ENCODE measurements at regions of chr20 and their contacts with region 1.

Region 1: GRCh38 chr20:2752567-2753460 is 47.6 kb downstream of the CPXM1 start:
- DNase-seq: peak; percentile 56
- H3K4me3 Mint-ChIP-seq: peak overlapping the region; percentile 75
- H3K27ac Mint-ChIP-seq: no peak overlapping the region
- H3K4me1 Mint-ChIP-seq: peaks cover 18% of the 10 kb centered on the region
- H3K27me3 Mint-ChIP-seq: peaks cover 20% of the 10 kb centered on the region

Region 2: DNA sequence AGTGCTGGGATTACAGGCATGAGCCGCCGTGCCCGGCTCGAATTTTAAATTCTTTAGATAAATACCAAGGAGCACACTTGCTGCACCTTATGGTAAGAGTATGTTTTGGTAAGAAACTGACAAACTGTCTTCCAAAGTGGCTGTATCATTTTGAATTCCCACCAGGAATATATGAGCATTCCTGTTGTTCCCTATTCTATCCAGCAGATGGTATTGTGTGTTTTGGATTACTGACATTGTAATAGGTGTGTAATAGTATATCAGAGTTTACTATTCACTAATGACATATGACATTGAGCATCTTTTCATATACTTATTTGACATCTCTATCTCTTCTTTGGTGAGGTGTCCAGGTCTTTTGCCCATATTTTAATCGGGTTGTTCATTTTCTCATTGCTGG is 331.6 kb before region 1 on chr20:
- CTCF ChIA-PET with region 1: no interaction called
- intact Hi-C with region 1: no loop called
- DNase-seq: no peak
- H3K4me3 Mint-ChIP-seq: no peak overlapping the region
- H3K27ac Mint-ChIP-seq: no peak overlapping the region
- H3K4me1 Mint-ChIP-seq: no peaks in the 10 kb centered on the region
- H3K27me3 Mint-ChIP-seq: peaks cover 3% of the 10 kb centered on the region

Region 3: DNA sequence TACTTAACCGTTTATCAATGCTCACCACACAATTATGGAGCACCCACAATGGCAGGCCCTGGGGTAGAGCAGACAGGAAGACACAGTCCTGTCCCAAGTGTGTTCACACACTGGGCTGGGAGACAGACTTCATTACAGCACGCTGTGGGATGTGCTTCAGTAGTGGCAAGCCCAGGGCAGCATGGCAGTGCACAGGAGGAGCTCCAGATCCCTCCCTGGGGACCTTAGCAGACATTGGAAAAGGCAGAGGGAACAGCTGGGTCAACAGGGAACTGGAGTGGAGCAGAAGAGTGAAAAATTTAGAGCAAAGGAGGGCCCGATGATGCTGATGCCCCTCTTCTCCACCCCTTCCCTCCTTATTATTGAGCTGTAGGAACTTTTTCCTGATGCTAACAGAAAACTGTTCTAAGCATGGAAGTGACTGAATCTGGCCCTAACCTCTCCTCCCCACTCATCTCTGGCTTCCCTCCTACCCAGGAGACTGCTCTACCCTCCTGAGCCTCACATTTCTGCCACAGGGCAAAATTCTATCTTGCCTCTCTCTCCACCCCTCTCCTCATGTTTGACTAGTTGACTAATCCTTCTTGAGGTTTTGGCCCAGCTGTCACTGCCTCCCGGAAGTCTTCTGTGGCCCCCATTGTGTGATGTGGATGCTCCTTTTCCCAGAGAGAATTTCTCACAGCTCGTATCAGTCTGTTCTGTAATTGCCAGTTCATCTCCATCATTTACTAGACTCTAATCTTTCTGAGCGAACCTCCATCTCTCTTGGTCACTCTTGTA is 141.7 kb before region 1 on chr20:
- CTCF ChIA-PET with region 1: no interaction called
- intact Hi-C with region 1: no loop called
- DNase-seq: no peak
- H3K4me3 Mint-ChIP-seq: no peak overlapping the region
- H3K27ac Mint-ChIP-seq: no peak overlapping the region
- H3K4me1 Mint-ChIP-seq: no peaks in the 10 kb centered on the region
- H3K27me3 Mint-ChIP-seq: peaks cover 8% of the 10 kb centered on the region

Region 4: GRCh38 chr20:2713285-2713684 is 39.5 kb before region 1 on chr20:
- CTCF ChIA-PET with region 1: interaction called, 13 read pairs
- intact Hi-C with region 1: no loop called
- DNase-seq: no peak
- H3K4me3 Mint-ChIP-seq: no peak overlapping the region
- H3K27ac Mint-ChIP-seq: no peak overlapping the region
- H3K4me1 Mint-ChIP-seq: no peaks in the 10 kb centered on the region
- H3K27me3 Mint-ChIP-seq: no peaks in the 10 kb centered on the region

Region 5: GRCh38 chr20:2729251-2729713 is 23.5 kb before region 1 on chr20:
- CTCF ChIA-PET with region 1: interaction called, 18 read pairs
- intact Hi-C with region 1: no loop called
- DNase-seq: peak; percentile 61
- H3K4me3 Mint-ChIP-seq: peak overlapping the region; percentile 44
- H3K27ac Mint-ChIP-seq: peak overlapping the region; percentile 68
- H3K4me1 Mint-ChIP-seq: peaks cover 21% of the 10 kb centered on the region
- H3K27me3 Mint-ChIP-seq: no peaks in the 10 kb centered on the region

Region 6: DNA sequence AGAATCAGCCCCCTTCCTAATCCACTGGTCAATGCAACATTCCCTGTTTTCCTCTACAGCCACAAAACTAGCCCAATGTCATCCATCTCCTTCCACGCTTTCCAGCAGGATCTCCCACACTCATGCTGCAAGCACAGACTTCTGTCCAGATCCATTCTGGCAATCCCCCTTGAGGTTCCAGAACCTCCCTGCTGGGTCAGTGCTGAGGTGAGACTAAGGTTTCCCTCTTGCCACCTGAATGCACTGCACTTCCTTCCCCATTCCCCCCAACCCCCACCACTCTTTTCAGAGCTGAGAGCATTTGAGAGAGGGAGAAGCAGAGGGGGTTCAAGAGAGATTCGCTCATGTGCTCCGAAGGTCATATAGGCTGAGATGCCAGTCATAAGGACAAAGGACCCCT is 16.4 kb before region 1 on chr20:
- CTCF ChIA-PET with region 1: interaction called, 49 read pairs
- intact Hi-C with region 1: no loop called
- DNase-seq: no peak
- H3K4me3 Mint-ChIP-seq: no peak overlapping the region
- H3K27ac Mint-ChIP-seq: no peak overlapping the region
- H3K4me1 Mint-ChIP-seq: peaks cover 24% of the 10 kb centered on the region
- H3K27me3 Mint-ChIP-seq: no peaks in the 10 kb centered on the region

Region 7: GRCh38 chr20:2849529-2849928 is 96.7 kb after region 1 on chr20:
- CTCF ChIA-PET with region 1: interaction called, 4 read pairs
- intact Hi-C with region 1: loop called (anchors 1 kb)
- DNase-seq: no peak
- H3K4me3 Mint-ChIP-seq: no peak overlapping the region
- H3K27ac Mint-ChIP-seq: peak overlapping the region; percentile 18
- H3K4me1 Mint-ChIP-seq: peaks cover 27% of the 10 kb centered on the region
- H3K27me3 Mint-ChIP-seq: no peaks in the 10 kb centered on the region

Region 8: DNA sequence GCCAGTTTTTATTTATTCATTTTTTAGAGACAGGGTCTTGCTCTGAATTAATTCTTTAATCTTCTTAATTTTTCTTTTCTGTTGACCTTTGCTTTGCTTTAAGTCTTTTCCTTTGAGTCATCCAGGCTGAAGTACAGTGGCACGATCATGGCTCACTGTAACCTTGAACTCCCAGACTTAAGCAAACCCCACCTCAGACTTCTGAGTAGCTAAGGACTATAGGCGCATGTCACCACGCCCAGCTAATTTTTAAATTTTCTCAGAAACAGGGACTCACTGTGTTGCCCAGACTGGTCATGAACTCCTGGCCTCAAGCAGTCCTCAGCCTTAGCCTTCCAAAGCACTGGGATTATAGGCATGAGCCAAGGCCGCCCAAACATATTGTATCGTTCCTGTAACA is 219.3 kb after region 1 on chr20:
- CTCF ChIA-PET with region 1: no interaction called
- intact Hi-C with region 1: no loop called
- DNase-seq: no peak
- H3K4me3 Mint-ChIP-seq: no peak overlapping the region
- H3K27ac Mint-ChIP-seq: no peak overlapping the region
- H3K4me1 Mint-ChIP-seq: peaks cover 3% of the 10 kb centered on the region
- H3K27me3 Mint-ChIP-seq: no peaks in the 10 kb centered on the region

Region 9: GRCh38 chr20:3000852-3001523 is 248.2 kb after region 1 on chr20:
- CTCF ChIA-PET with region 1: interaction called, 6 read pairs
- intact Hi-C with region 1: loop called (anchors 2 kb)
- DNase-seq: peak; percentile 18
- H3K4me3 Mint-ChIP-seq: no peak overlapping the region
- H3K27ac Mint-ChIP-seq: no peak overlapping the region
- H3K4me1 Mint-ChIP-seq: no peaks in the 10 kb centered on the region
- H3K27me3 Mint-ChIP-seq: no peaks in the 10 kb centered on the region

Region 10: GRCh38 chr20:3430376-3431069 is 677.7 kb after region 1 on chr20:
- CTCF ChIA-PET with region 1: no interaction called
- intact Hi-C with region 1: no loop called
- DNase-seq: no peak
- H3K4me3 Mint-ChIP-seq: no peak overlapping the region
- H3K27ac Mint-ChIP-seq: no peak overlapping the region
- H3K4me1 Mint-ChIP-seq: no peaks in the 10 kb centered on the region
- H3K27me3 Mint-ChIP-seq: peaks cover 13% of the 10 kb centered on the region

Measured in activated naive CD4-positive, alpha-beta T cell treated with anti-CD3 and anti-CD28 coated beads for 36 hours (primary cell).